Calu3 (cell line): ENCODE measurements at regions of chr21 and their contacts with region 1.

Region 1: DNA sequence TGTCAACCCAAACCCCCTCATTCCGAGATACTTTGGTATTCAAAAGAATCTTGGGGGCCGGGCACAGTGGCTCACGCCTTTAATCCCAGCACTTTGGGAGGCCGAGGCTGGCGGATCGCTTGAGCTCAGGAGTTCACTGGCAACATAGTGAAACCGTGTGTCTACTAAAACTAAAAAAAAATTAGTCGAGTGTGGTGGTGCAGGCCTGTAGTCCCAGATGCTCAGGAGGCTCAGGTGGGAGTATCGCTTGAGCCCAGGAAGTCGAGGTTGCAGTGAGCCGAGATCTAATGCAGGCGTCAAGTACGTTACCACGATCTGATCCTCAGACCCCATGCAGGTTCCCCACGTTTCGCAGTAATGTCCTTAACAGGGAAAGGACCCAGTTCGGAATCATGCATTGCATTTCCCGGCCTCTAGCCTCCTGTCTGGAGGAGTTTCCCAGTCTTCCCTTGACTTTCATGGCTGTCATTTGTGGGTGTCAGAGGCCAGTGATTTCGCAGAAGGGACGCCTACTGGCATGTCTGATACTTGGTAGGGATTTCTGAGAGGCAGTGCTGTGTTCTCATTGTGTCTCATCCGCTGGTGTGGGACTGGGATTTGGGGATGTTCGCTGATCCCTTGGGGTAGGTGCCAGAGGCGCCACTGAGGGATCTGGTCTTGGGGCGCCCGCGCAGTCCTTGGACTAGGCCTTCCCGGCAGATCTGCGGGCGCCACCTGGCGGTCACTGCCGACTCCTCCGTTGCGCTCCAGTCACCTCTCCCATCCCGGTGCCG is 39.3 kb upstream of the HMGN1 start:
- DNase-seq: peak; percentile 91
- H3K4me3 Mint-ChIP-seq: peak overlapping the region; percentile 74
- H3K27ac Mint-ChIP-seq: peak overlapping the region; percentile 47
- H3K4me1 Mint-ChIP-seq: peaks cover 8% of the 10 kb centered on the region
- H3K27me3 Mint-ChIP-seq: no peaks in the 10 kb centered on the region
- CTCF ChIP-seq: peak; percentile 68

Region 2: DNA sequence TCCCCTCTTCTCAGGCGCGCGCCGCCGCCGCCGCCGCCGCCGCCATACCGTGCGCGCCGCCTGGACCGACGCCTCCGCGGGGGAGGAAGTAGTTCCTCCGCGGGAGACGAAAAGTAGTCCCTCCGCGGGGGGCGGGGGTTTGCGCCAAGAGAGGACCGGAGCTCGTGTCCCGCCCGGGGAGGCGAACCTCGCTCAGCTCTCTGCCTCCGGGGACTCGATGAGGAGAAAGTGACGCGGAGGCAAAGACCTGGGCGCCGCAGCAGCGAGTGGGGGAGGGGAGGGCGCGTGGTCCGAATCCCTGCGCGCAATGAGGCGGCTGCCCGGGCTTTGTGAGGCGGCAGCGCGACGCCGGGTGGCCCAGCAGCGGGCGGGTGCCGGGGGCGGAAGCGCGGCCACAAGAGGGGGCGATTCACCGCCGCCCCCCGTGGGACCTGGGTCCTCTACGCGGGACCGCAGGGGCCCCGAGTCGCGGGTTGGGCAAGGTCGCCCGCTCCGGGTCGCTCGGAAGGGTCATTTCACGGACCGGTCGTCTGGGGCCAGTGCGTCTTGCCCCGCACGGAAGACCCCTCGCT is 74.6 kb before region 1 on chr21 and contains the start of gene BRWD1:
- CTCF ChIA-PET with region 1: interaction called, 7 read pairs
- intact Hi-C with region 1: loop called (anchors 10 kb)
- DNase-seq: peak; percentile 81
- H3K4me3 Mint-ChIP-seq: peak within 1 kb of the TSS; percentile 96
- H3K27ac Mint-ChIP-seq: peak within 1 kb of the TSS; percentile 93
- H3K4me1 Mint-ChIP-seq: peaks cover 8% of the 10 kb centered on the region
- H3K27me3 Mint-ChIP-seq: no peaks in the 10 kb centered on the region
- CTCF ChIP-seq: no peak
- total RNA-seq, gene BRWD1: 27.6 and 28.8 TPM in 2 replicates

Region 3: DNA sequence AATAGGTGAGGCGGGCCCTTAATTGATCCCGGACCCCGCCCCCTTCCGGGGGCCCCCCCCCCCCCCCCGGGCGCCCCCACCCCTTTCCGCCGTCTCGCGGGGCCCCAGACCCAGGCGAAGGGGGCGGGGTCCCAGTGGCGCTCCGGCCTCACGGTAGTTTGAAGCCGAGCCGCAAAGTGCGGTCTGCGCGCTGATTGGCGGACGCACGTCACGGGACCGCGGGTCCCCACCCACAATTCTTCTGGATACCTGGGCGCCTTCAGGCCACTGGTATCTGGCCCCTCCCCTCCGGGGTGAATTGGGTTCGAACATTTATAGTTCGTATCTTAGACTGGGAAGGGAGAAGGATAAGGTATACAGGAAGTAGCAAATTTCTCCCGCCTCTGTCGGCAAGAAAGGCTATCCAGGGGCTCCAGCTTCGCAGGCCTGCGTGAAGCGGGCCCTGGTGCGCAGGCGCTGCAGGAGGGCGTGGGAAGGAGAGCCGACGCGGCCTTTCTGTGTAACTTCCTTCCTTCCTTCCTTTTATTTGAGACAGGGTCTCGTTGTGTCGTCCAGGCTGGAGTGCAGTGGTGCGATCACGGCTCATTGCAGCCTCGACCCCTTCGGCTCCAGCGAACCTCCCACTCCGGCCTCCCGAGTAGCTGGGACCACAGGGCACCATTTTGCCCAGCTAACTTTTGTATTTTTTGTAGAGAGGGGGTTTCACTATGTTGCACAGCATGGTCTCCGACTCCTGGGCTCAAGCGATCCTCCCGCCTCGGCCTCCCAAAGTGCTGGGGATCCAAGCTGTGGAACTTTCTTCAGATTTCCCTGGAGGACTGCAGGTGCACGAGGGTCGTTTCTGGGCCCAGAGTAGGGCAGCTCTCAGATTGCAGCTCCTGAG is 38.8 kb before region 1 on chr21:
- CTCF ChIA-PET with region 1: interaction called, 11 read pairs
- intact Hi-C with region 1: no loop called
- DNase-seq: peak; percentile 96
- H3K4me3 Mint-ChIP-seq: peak overlapping the region; percentile 72
- H3K27ac Mint-ChIP-seq: peak overlapping the region; percentile 77
- H3K4me1 Mint-ChIP-seq: peaks cover 28% of the 10 kb centered on the region
- H3K27me3 Mint-ChIP-seq: no peaks in the 10 kb centered on the region
- CTCF ChIP-seq: no peak

Region 4: GRCh38 chr21:39373644-39374043 is 14.6 kb before region 1 on chr21:
- CTCF ChIA-PET with region 1: interaction called, 20 read pairs
- intact Hi-C with region 1: no loop called
- DNase-seq: no peak
- H3K4me3 Mint-ChIP-seq: no peak overlapping the region
- H3K27ac Mint-ChIP-seq: no peak overlapping the region
- H3K4me1 Mint-ChIP-seq: no peaks in the 10 kb centered on the region
- H3K27me3 Mint-ChIP-seq: no peaks in the 10 kb centered on the region
- CTCF ChIP-seq: no peak

Region 5: GRCh38 chr21:39479142-39479813 is 91.1 kb after region 1 on chr21:
- CTCF ChIA-PET with region 1: no interaction called
- intact Hi-C with region 1: no loop called
- DNase-seq: no peak
- H3K4me3 Mint-ChIP-seq: no peak overlapping the region
- H3K27ac Mint-ChIP-seq: no peak overlapping the region
- H3K4me1 Mint-ChIP-seq: no peaks in the 10 kb centered on the region
- H3K27me3 Mint-ChIP-seq: no peaks in the 10 kb centered on the region
- CTCF ChIP-seq: no peak

Region 6: GRCh38 chr21:39515684-39516472 is 127.7 kb after region 1 on chr21:
- CTCF ChIA-PET with region 1: no interaction called
- intact Hi-C with region 1: no loop called
- DNase-seq: no peak
- H3K4me3 Mint-ChIP-seq: no peak overlapping the region
- H3K27ac Mint-ChIP-seq: no peak overlapping the region
- H3K4me1 Mint-ChIP-seq: no peaks in the 10 kb centered on the region
- H3K27me3 Mint-ChIP-seq: no peaks in the 10 kb centered on the region
- CTCF ChIP-seq: no peak

Region 7: DNA sequence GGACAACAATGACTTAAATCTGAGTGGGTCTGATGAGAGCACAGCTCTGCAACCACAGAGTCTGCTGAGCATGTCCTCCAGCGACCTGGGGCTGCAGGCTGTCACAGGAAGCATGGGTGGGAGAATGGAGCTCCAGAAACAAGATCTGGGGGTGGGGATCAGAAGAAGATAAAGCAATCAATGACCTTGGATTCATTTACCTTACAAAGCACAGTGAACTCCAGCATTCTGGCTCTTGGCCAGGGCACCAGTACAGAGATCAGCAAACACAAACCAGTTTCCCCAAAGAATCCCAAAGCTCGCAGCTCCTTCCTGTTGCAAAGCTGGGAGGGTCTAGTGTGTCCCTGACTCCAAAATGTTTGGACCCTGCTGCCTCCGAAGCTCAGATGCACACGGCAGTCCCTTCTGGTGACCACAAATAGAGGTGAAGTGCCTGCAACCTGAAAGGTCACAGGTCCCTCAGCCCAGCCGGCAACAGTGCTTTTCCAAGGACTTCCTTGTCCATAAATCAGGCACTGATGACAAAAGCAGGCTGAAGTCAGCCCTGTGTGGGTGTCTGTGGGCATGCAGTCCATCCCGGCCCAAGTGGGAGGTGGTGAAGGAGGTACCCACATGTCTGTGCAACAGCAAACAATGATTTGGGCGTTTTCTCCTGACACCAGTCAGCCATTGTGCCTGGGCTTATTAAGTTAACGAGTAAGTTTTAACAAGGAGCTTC is 139.6 kb after region 1 on chr21:
- CTCF ChIA-PET with region 1: no interaction called
- intact Hi-C with region 1: no loop called
- DNase-seq: peak; percentile 31
- H3K4me3 Mint-ChIP-seq: peak overlapping the region; percentile 32
- H3K27ac Mint-ChIP-seq: no peak overlapping the region
- H3K4me1 Mint-ChIP-seq: peaks cover 19% of the 10 kb centered on the region
- H3K27me3 Mint-ChIP-seq: no peaks in the 10 kb centered on the region
- CTCF ChIP-seq: no peak